ENCODE measurements at regions of chr9 and their contacts with region 1.

Region 1: DNA sequence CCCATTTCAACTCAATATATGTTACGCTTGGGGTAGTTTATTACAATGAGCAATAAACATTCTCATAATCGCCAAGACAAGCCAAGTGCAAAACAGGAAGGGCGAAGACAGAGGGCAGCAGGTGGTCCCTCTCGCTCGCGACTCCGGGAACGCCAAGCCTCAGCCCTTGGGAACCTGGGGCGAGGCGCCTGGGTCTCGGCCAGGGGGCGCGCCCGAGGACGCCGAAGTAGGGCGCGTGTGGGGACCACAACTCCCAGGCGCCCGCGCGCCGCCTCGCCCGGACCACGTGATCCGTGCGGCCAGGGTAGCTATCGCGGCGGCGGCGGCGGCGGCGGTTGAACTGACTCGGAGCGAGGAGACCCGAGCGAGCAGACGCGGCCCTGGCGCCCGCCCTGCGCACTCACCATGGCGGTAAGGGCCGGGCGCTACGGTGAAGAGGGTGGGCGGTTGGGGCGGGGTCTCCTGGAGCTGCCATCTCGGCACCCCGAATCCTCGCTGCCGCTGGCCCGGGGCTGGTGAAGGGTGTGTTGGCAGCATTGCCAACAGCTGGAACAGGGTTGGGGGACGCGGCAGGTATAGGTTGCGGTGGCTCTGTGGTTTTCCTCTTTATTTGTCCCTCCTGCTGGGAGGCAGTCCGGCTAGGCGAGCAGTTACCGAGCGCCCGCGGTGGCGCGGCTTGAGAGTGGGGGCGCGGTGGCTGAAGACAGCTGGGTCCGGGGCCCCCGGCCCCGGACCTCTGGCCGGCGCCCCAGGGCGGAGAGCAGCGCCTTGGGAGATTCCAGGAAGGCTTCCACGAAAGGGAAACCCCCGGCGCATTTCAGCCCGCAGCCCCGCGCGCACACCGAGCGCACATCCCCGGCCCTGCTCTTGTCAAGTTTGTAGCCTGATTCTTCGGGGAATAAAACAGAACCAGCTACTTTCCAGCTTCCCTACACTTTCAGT is at the start of gene SLC31A2:
- DNase-seq: peak; percentile 91 to 94
- H3K4me3 ChIP-seq: peak within 1 kb of the TSS; percentile 84
- H3K4me3 Mint-ChIP-seq: peak within 1 kb of the TSS; percentile 74
- H3K27ac Mint-ChIP-seq: no peak within 1 kb of the TSS
- H3K4me1 ChIP-seq: peaks cover 11% of the 10 kb centered on the region
- H3K4me1 Mint-ChIP-seq: peaks cover 21% of the 10 kb centered on the region
- H3K27me3 ChIP-seq: no peaks in the 10 kb centered on the region
- H3K27me3 Mint-ChIP-seq: peaks cover 3% of the 10 kb centered on the region
- CTCF ChIP-seq: peak; percentile 46 to 57
- total RNA-seq, gene SLC31A2: 4.7 and 5.1 TPM in 2 replicates

Region 2: GRCh38 chr9:113221003-113221799 is 70.3 kb after region 1 on chr9 and contains the starts of genes FKBP15 and SLC31A1:
- CTCF ChIA-PET with region 1: interaction called, 13 read pairs
- POLR2A ChIA-PET with region 1: interaction called, 9 read pairs
- intact Hi-C with region 1: no loop called
- DNase-seq: peak; percentile 98 to 99
- H3K4me3 ChIP-seq: peak within 1 kb of the TSS; percentile 74
- H3K4me3 Mint-ChIP-seq: peak within 1 kb of the TSS; percentile 97
- H3K27ac Mint-ChIP-seq: peak within 1 kb of the TSS; percentile 93
- H3K4me1 ChIP-seq: peaks cover 15% of the 10 kb centered on the region
- H3K4me1 Mint-ChIP-seq: peaks cover 17% of the 10 kb centered on the region
- H3K27me3 ChIP-seq: no peaks in the 10 kb centered on the region
- H3K27me3 Mint-ChIP-seq: no peaks in the 10 kb centered on the region
- CTCF ChIP-seq: no peak
- total RNA-seq, gene FKBP15: 20.1 TPM in 2 replicates
- total RNA-seq, gene SLC31A1: 57.8 and 64.9 TPM in 2 replicates